ENCODE measurements at regions of chr5 and their contacts with region 1.

Region 1: GRCh38 chr5:132238169-132238744 is 10.6 kb upstream of the P4HA2 start:
- DNase-seq: peak; percentile 32
- ATAC-seq: peak; percentile 98
- H3K4me3 ChIP-seq: no peak overlapping the region
- H3K27ac ChIP-seq: no peak overlapping the region
- H3K4me1 ChIP-seq: no peaks in the 10 kb centered on the region
- H3K27me3 ChIP-seq: no peaks in the 10 kb centered on the region
- CTCF ChIP-seq: peak; percentile 83 to 87 (median 87)
- EP300 ChIP-seq: no peak
- POLR2A ChIP-seq: no peak
- RAD21 ChIP-seq: peak; percentile 83

Region 2: GRCh38 chr5:132190161-132190817 is 48.0 kb before region 1 on chr5:
- CTCF ChIA-PET with region 1: interaction called, 26 read pairs
- POLR2A ChIA-PET with region 1: interaction called, 3 read pairs
- RAD21 ChIA-PET with region 1: interaction called, 14 read pairs
- SMC1A ChIA-PET with region 1: interaction called, 16 read pairs
- in situ Hi-C with region 1: no loop called
- intact Hi-C with region 1: no loop called
- DNase-seq: no peak
- ATAC-seq: peak; percentile 100
- H3K4me3 ChIP-seq: no peak overlapping the region
- H3K27ac ChIP-seq: no peak overlapping the region
- H3K4me1 ChIP-seq: no peaks in the 10 kb centered on the region
- H3K27me3 ChIP-seq: no peaks in the 10 kb centered on the region
- CTCF ChIP-seq: peak; percentile 64 to 69 (median 65)
- EP300 ChIP-seq: no peak
- POLR2A ChIP-seq: no peak
- RAD21 ChIP-seq: peak; percentile 68

Region 3: DNA sequence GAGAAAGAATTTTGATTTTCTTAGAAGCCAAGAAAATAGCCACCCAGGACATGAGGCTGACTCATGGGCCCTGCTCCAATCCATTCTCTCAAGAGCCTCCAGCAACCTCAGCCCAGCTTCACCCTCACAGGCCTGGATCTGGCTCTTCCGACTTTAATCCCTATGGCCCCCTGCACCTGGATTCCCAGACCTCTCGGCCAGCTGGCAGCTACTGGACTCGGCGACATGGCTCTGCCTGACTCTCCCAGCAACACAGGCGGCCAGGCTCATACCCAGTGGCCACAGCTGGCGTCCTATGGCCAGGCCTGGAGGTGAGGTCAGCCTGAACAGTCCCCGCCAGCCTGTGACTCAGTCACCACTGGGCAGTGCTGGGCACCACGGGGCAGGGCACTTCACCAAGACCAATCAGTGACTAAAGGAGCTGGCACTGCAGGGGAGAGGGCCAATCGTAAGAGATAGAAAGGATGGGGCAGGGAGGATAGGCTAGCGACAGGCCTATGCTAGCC is 13.0 kb after region 1 on chr5:
- CTCF ChIA-PET with region 1: interaction called, 74 read pairs
- POLR2A ChIA-PET with region 1: interaction called, 3 read pairs
- RAD21 ChIA-PET with region 1: interaction called, 11 read pairs
- SMC1A ChIA-PET with region 1: interaction called, 16 read pairs
- in situ Hi-C with region 1: no loop called
- intact Hi-C with region 1: no loop called
- DNase-seq: no peak
- ATAC-seq: no peak
- H3K4me3 ChIP-seq: no peak overlapping the region
- H3K27ac ChIP-seq: no peak overlapping the region
- H3K4me1 ChIP-seq: no peaks in the 10 kb centered on the region
- H3K27me3 ChIP-seq: no peaks in the 10 kb centered on the region; a peak in 1 of 4 replicates
- CTCF ChIP-seq: no peak
- EP300 ChIP-seq: no peak
- POLR2A ChIP-seq: no peak
- RAD21 ChIP-seq: no peak

Region 4: DNA sequence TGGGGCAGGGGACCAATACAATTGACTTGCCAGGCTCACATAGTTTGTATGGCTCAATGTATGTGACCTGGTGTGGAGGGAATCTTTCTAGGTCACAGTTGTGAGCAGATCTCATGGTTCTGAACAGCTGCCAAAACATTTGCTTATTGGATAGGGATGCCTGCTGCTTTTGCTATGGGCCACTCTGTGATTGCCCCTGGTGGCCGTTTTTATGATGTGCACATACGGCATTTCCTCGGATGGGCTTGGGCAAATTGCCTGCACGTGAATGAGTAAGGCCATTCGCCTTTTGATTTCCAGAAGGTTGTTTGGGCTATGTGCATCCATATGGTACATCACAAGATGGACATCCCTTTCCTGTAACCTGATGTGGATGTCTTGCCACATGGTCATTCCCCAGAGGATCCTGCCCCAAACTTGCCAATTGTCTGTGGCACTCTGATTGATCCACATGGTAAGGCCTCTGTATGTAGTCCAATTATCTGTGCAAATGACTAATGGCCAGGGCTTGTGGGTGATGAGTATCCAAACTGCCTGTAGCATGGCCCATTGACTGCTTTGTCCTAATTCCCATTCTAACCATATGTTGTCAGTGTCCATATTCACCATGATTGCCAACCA is 45.3 kb after region 1 on chr5:
- CTCF ChIA-PET with region 1: interaction called, 16 read pairs
- POLR2A ChIA-PET with region 1: no interaction called
- RAD21 ChIA-PET with region 1: interaction called, 6 read pairs
- SMC1A ChIA-PET with region 1: interaction called, 16 read pairs
- in situ Hi-C with region 1: no loop called
- intact Hi-C with region 1: no loop called
- DNase-seq: no peak
- ATAC-seq: peak; percentile 32; the same call in 1 of the 3 replicates
- H3K4me3 ChIP-seq: no peak overlapping the region
- H3K27ac ChIP-seq: no peak overlapping the region
- H3K4me1 ChIP-seq: no peaks in the 10 kb centered on the region
- H3K27me3 ChIP-seq: peaks cover 3 to 8% of the 10 kb centered on the region in 2 experiments; a peak in 2 of 4 replicates
- CTCF ChIP-seq: peak in 2 of 3 experiments; percentile 20 to 28; a peak in 1 of 6 replicates
- EP300 ChIP-seq: no peak
- POLR2A ChIP-seq: no peak
- RAD21 ChIP-seq: no peak

Region 5: GRCh38 chr5:132334812-132335211 is 96.6 kb after region 1 on chr5:
- CTCF ChIA-PET with region 1: interaction called, 5 read pairs
- POLR2A ChIA-PET with region 1: no interaction called
- RAD21 ChIA-PET with region 1: interaction called, 3 read pairs
- SMC1A ChIA-PET with region 1: interaction called, 16 read pairs
- in situ Hi-C with region 1: no loop called
- intact Hi-C with region 1: no loop called
- DNase-seq: no peak
- ATAC-seq: peak; percentile 78
- H3K4me3 ChIP-seq: no peak overlapping the region
- H3K27ac ChIP-seq: no peak overlapping the region
- H3K4me1 ChIP-seq: no peaks in the 10 kb centered on the region
- H3K27me3 ChIP-seq: no peaks in the 10 kb centered on the region
- CTCF ChIP-seq: no peak
- EP300 ChIP-seq: no peak
- POLR2A ChIP-seq: no peak
- RAD21 ChIP-seq: no peak

Region 6: GRCh38 chr5:132386644-132387286 is 148.5 kb after region 1 on chr5:
- CTCF ChIA-PET with region 1: interaction called, 16 read pairs
- POLR2A ChIA-PET with region 1: no interaction called
- RAD21 ChIA-PET with region 1: interaction called, 15 read pairs
- SMC1A ChIA-PET with region 1: interaction called, 24 read pairs
- in situ Hi-C with region 1: no loop called
- intact Hi-C with region 1: loop called (anchors 5 kb)
- DNase-seq: peak; percentile 70
- ATAC-seq: peak; percentile 96
- H3K4me3 ChIP-seq: no peak overlapping the region
- H3K27ac ChIP-seq: no peak overlapping the region
- H3K4me1 ChIP-seq: peaks cover 20% of the 10 kb centered on the region
- H3K27me3 ChIP-seq: no peaks in the 10 kb centered on the region
- CTCF ChIP-seq: peak; percentile 86 to 97 (median 93)
- EP300 ChIP-seq: no peak
- POLR2A ChIP-seq: no peak
- RAD21 ChIP-seq: peak; percentile 91